ENCODE measurements at regions of chr20 and their contacts with region 1.

Region 1: DNA sequence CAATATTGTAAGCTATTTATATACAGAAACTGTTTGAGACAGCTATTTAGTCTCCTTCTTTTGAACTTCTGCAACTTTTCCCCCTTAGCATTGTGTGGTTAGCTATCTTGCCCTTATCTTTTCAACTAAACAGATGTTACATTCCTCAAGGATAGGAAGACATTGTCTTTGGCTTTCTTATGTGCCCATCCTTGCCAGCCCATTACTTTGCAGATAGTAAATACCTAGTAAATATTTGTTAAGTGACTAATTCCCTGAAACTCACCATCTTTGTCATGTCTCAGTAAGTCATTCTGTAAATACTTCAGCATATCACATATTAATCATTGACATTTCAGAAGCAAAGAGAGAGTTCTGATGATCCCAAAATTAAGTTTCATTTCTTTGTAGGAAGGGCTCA is 69.1 kb upstream of the FLRT3 start:
- DNase-seq: no peak
- ATAC-seq: no peak

Region 2: DNA sequence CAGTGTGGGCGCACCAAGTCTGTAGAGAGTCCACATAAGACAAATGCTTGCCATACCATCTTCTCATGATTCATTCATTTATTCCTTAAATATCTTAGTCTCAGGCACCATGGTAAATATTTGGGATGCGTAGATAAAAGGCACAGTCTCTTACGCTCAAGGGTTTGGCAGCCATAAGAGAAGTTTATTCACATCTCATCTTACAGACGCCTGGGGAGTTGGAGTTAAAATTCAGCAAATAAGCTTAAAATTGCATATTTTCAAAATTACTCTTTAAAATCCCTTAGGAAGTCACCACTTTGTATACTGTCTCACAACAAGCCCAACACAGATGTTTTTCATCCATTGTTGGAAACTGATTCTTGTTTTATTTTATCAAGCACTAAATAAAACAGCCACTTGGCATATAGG is 1803.5 kb after region 1 on chr20:
- intact Hi-C with region 1: loop called (anchors 10 kb)
- DNase-seq: no peak
- ATAC-seq: no peak